Dorsolateral prefrontal cortex (tissue), 120 donors: ENCODE measurements at regions of chr5 and their contacts with region 1.

Region 1: GRCh38 chr5:116361171-116361967 is 213.3 kb downstream of the SEMA6A start:
- DNase-seq: peak; percentile 68 to 84 (median 75)
- H3K4me3 ChIP-seq: peak overlapping the region; percentile 27 to 72 (median 57)
- H3K27ac ChIP-seq: peak overlapping the region in 58 of 59 donors; percentile 5 to 90 (median 79)
- H3K27me3 ChIP-seq: no peaks in the 10 kb centered on the region
- CTCF ChIP-seq: peak in 54 of 56 donors; percentile 22 to 82 (median 51)

Region 2: GRCh38 chr5:116409591-116410296 is 48.4 kb after region 1 on chr5:
- intact Hi-C with region 1: loop called in 1 of 2 experiments (anchors 5 kb)
- DNase-seq: peak in 1 of 10 donors; percentile 53
- H3K4me3 ChIP-seq: no peak overlapping the region
- H3K27ac ChIP-seq: peak overlapping the region in 2 of 59 donors; percentile 2 to 38
- H3K27me3 ChIP-seq: no peaks in the 10 kb centered on the region
- CTCF ChIP-seq: no peak

Region 3: GRCh38 chr5:116442095-116442534 is 80.7 kb after region 1 on chr5:
- intact Hi-C with region 1: loop called in 1 of 2 experiments (anchors 10 kb)
- DNase-seq: peak in 1 of 10 donors; percentile 93
- H3K4me3 ChIP-seq: no peak overlapping the region
- H3K27ac ChIP-seq: peak overlapping the region in 46 of 59 donors; percentile 1 to 89 (median 50)
- H3K27me3 ChIP-seq: no peaks in the 10 kb centered on the region
- CTCF ChIP-seq: no peak